Naive thymus-derived CD4-positive, alpha-beta T cell (primary cell): ENCODE measurements at regions of chr1 and their contacts with region 1.

Region 1: GRCh38 chr1:36223993-36224536 is at the start of gene THRAP3:
- DNase-seq: peak; percentile 96 to 100 (median 100)
- ATAC-seq: peak; percentile 92
- H3K4me3 ChIP-seq: peak within 1 kb of the TSS; percentile 69
- H3K4me3 Mint-ChIP-seq: peak within 1 kb of the TSS; percentile 96 to 99 (median 98)
- H3K27ac ChIP-seq: peak within 1 kb of the TSS; percentile 98
- H3K27ac Mint-ChIP-seq: peak within 1 kb of the TSS; percentile 96 to 100 (median 100)
- H3K4me1 ChIP-seq: peaks cover 27 to 29% of the 10 kb centered on the region in 2 donors
- H3K4me1 Mint-ChIP-seq: peaks cover 21 to 43% (median 35%) of the 10 kb centered on the region in 7 donors
- H3K27me3 ChIP-seq: no peaks in the 10 kb centered on the region
- H3K27me3 Mint-ChIP-seq: no peaks in the 10 kb centered on the region
- total RNA-seq, gene THRAP3: 62.1 to 138 (median 122) TPM

Region 2: GRCh38 chr1:35557292-35558063 is 666.6 kb before region 1 on chr1 and contains the starts of genes KIAA0319L and NCDN:
- CTCF ChIA-PET with region 1: no interaction called
- POLR2A ChIA-PET with region 1: no interaction called
- intact Hi-C with region 1: loop called in 1 of 2 experiments (anchors 2 kb)
- DNase-seq: peak; percentile 86 to 96 (median 94)
- ATAC-seq: peak; percentile 96
- H3K4me3 ChIP-seq: peak within 1 kb of the TSS; percentile 87
- H3K4me3 Mint-ChIP-seq: peak within 1 kb of the TSS; percentile 90 to 99 (median 96)
- H3K27ac ChIP-seq: peak within 1 kb of the TSS; percentile 77
- H3K27ac Mint-ChIP-seq: peak within 1 kb of the TSS; percentile 89 to 98 (median 93)
- H3K4me1 ChIP-seq: peaks cover 16 to 19% of the 10 kb centered on the region in 2 donors
- H3K4me1 Mint-ChIP-seq: peaks cover 40 to 69% (median 53%) of the 10 kb centered on the region in 7 donors
- H3K27me3 ChIP-seq: no peaks in the 10 kb centered on the region
- H3K27me3 Mint-ChIP-seq: no peaks in the 10 kb centered on the region
- total RNA-seq, gene KIAA0319L: 62.0 to 79.7 (median 65.6) TPM
- total RNA-seq, gene NCDN: 19.4 to 38.6 (median 26.4) TPM

Region 3: DNA sequence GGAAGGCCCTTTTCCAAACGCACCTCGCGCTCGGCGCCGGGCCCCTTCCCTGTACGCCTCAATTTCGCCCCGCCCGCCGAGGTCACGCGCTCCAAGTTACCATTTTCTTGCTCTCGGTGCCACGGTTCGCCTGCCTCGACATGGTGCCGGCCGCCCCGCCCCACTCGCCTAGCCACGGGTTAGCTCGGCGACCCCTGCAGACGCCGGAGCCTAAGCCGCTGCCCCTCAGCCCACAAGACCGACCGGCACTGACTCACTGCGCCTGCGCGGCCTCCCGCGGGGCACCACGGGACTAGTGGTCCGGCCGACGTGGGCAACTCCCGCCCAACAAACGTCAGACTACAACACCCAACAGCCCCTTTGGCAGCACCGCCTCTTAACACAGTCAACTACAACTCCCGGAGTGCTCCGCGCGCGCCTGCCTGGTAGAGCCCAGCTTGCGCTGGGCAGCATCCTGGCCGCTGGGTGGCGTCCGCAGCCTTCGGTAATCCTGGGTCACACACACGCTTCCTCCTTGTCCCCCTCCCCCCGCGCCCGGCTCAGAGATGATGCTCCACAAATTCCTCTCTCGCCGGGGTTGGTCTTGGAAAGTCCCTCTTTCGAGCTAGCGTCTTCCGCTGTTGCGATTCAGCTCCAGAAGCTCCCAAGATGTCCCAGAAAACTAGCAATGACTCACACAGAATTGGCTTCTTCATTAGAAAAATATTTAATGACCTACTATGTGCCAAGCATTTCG is 74.7 kb before region 1 on chr1 and contains the start of gene TRAPPC3:
- CTCF ChIA-PET with region 1: interaction called, 13 read pairs
- POLR2A ChIA-PET with region 1: interaction called, 96 read pairs
- intact Hi-C with region 1: loop called (anchors 1 kb)
- DNase-seq: peak; percentile 96 to 100 (median 99)
- ATAC-seq: peak; percentile 96
- H3K4me3 ChIP-seq: peak within 1 kb of the TSS; percentile 95
- H3K4me3 Mint-ChIP-seq: peak within 1 kb of the TSS; percentile 90 to 100 (median 98)
- H3K27ac ChIP-seq: peak within 1 kb of the TSS; percentile 91
- H3K27ac Mint-ChIP-seq: peak within 1 kb of the TSS; percentile 97 to 100 (median 98)
- H3K4me1 ChIP-seq: peaks cover 35 to 52% of the 10 kb centered on the region in 2 donors
- H3K4me1 Mint-ChIP-seq: peaks cover 48 to 84% (median 66%) of the 10 kb centered on the region in 7 donors
- H3K27me3 ChIP-seq: no peaks in the 10 kb centered on the region
- H3K27me3 Mint-ChIP-seq: no peaks in the 10 kb centered on the region
- total RNA-seq, gene TRAPPC3: 32.1 to 60.5 (median 47.2) TPM

Region 4: GRCh38 chr1:36239941-36240637 is 16.0 kb after region 1 on chr1:
- CTCF ChIA-PET with region 1: interaction called, 6 read pairs
- POLR2A ChIA-PET with region 1: interaction called, 17 read pairs
- intact Hi-C with region 1: no loop called
- DNase-seq: no peak
- ATAC-seq: no peak
- H3K4me3 ChIP-seq: no peak overlapping the region
- H3K4me3 Mint-ChIP-seq: no peak overlapping the region
- H3K27ac ChIP-seq: no peak overlapping the region
- H3K27ac Mint-ChIP-seq: peak overlapping the region in 2 of 9 donors; percentile 49 to 69
- H3K4me1 ChIP-seq: peaks cover 5 to 14% of the 10 kb centered on the region in 2 donors
- H3K4me1 Mint-ChIP-seq: peaks cover 24 to 51% (median 42%) of the 10 kb centered on the region in 7 donors
- H3K27me3 ChIP-seq: no peaks in the 10 kb centered on the region
- H3K27me3 Mint-ChIP-seq: no peaks in the 10 kb centered on the region

Region 5: GRCh38 chr1:36369061-36369861 is 145.2 kb after region 1 on chr1:
- CTCF ChIA-PET with region 1: no interaction called
- POLR2A ChIA-PET with region 1: interaction called, 5 read pairs
- intact Hi-C with region 1: loop called in 1 of 2 experiments (anchors 5 kb)
- DNase-seq: peak; percentile 70 to 87 (median 80)
- ATAC-seq: peak; percentile 75
- H3K4me3 ChIP-seq: no peak overlapping the region
- H3K4me3 Mint-ChIP-seq: peak overlapping the region in 7 of 10 donors; percentile 2 to 57 (median 32)
- H3K27ac ChIP-seq: peak overlapping the region; percentile 37
- H3K27ac Mint-ChIP-seq: peak overlapping the region; percentile 56 to 97 (median 94)
- H3K4me1 ChIP-seq: peaks cover 27 to 59% of the 10 kb centered on the region in 2 donors
- H3K4me1 Mint-ChIP-seq: peaks cover 50 to 79% (median 69%) of the 10 kb centered on the region in 7 donors
- H3K27me3 ChIP-seq: no peaks in the 10 kb centered on the region
- H3K27me3 Mint-ChIP-seq: no peaks in the 10 kb centered on the region

Region 6: DNA sequence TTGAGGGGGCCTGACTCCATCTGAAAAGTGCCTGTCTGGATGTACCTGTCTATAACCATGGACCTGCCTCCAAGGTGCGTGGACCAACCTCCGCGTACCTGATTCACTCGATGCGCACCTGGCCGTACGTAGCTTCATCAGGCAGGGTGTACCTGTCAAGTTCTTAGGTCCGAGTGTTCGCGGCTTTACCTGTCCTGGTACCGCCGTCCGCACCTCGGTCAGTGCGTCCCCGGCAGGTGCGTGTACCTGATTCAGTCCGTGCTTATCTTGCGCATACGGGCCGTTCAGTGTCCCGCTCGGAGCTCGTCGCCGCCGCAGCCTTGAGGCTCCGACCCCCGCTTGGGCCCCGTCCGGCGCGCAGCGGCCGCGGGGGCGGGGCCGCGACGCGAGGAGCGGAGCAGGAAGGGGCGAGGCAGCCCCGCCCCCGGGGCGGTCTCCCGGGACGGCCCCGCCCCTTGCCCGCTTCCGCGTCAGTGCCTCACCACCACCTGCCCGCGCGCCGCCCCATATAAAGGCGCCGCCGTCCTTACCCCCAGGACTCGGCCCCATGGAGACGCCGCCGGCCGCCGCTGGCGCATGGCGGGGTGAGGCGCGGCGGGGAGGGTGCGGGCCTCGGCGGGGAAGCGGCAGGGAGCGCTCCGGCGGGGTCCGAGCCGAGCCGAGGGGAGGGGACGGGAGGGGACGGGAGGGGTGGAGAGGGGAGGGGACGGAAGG is 1250.1 kb after region 1 on chr1 and contains the start of gene ZC3H12A:
- CTCF ChIA-PET with region 1: no interaction called
- POLR2A ChIA-PET with region 1: no interaction called
- intact Hi-C with region 1: loop called in 1 of 2 experiments (anchors 10 kb)
- DNase-seq: peak; percentile 87 to 98 (median 93)
- ATAC-seq: peak; percentile 82
- H3K4me3 ChIP-seq: peak within 1 kb of the TSS; percentile 97
- H3K4me3 Mint-ChIP-seq: peak within 1 kb of the TSS; percentile 91 to 99 (median 96)
- H3K27ac ChIP-seq: peak within 1 kb of the TSS; percentile 95
- H3K27ac Mint-ChIP-seq: peak within 1 kb of the TSS; percentile 93 to 99 (median 98)
- H3K4me1 ChIP-seq: peaks cover 28 to 33% of the 10 kb centered on the region in 2 donors
- H3K4me1 Mint-ChIP-seq: peaks cover 43 to 59% (median 54%) of the 10 kb centered on the region in 7 donors
- H3K27me3 ChIP-seq: no peaks in the 10 kb centered on the region
- H3K27me3 Mint-ChIP-seq: no peaks in the 10 kb centered on the region
- total RNA-seq, gene ZC3H12A: 35.0 to 122 (median 46.7) TPM